Activated CD4-positive, alpha-beta memory T cell treated with anti-CD3 and anti-CD28 coated beads for 36 hours (primary cell): ENCODE measurements at regions of chr3 and their contacts with region 1.

Region 1: DNA sequence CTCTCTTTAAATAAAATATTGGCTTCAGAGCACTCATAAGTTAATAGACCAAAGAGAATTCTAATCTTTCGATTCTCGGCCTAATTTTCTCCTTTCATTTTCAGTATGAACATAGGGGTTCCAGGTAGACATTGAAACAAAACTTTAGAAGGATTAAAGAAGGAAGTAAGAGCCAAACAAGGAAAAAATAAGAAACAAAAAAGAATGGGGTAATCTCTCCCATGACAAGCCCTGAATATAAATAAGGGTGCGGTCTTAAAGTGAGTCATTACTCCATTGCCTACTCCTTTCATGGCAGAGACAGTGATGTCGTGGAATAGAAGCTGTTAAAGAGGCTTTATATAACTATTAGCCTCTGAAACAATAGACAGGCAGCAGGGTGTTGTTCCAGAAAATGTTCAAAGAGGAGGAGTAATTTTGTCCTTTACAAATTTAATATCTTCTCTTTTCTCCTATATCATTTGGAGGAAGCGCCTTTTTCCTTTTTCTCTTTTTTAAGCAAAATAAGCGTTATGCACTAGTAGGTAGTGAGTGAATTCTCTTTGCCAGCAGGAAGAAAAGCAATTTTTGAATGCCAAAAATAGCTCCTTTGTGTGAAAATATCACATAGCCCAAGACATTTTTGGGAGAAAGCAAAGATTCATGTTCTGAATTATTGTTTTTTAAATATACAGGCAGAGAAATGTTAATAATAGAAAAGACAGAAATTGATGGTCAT is 607.9 kb upstream of the KCNMB2 start:
- DNase-seq: no peak
- H3K4me3 Mint-ChIP-seq: no peak overlapping the region
- H3K27ac Mint-ChIP-seq: no peak overlapping the region
- H3K4me1 Mint-ChIP-seq: peaks cover 24% of the 10 kb centered on the region
- H3K27me3 Mint-ChIP-seq: no peaks in the 10 kb centered on the region

Region 2: DNA sequence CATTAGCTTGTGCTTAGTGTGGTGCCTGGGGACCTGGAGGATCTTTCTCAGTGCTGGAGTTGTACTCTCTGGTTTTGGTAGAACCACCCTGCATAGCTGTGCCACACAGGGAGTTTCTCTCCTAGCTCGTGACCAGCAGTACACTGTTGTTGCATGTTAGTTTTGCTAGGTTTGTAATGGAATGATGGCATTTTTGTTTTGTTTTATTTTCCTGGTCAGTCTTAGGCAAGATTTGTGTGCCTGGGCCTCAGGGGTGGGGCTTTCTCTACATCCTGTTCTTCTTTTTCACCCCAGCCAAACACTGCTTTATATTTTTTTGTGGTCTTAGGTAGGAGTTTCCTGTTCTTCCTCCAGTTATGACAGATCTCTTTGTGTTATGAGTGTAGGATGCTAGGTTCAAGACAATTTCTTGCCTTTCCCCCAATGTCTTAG is 73.4 kb after region 1 on chr3:
- CTCF ChIA-PET with region 1: no interaction called
- POLR2A ChIA-PET with region 1: no interaction called
- intact Hi-C with region 1: loop called (anchors 1 kb)
- DNase-seq: peak; percentile 57
- H3K4me3 Mint-ChIP-seq: no peak overlapping the region
- H3K27ac Mint-ChIP-seq: peak overlapping the region; percentile 35
- H3K4me1 Mint-ChIP-seq: peaks cover 53% of the 10 kb centered on the region
- H3K27me3 Mint-ChIP-seq: no peaks in the 10 kb centered on the region